Caco-2 (cell line): ENCODE measurements at regions of chr13 and their contacts with region 1.

Region 1: DNA sequence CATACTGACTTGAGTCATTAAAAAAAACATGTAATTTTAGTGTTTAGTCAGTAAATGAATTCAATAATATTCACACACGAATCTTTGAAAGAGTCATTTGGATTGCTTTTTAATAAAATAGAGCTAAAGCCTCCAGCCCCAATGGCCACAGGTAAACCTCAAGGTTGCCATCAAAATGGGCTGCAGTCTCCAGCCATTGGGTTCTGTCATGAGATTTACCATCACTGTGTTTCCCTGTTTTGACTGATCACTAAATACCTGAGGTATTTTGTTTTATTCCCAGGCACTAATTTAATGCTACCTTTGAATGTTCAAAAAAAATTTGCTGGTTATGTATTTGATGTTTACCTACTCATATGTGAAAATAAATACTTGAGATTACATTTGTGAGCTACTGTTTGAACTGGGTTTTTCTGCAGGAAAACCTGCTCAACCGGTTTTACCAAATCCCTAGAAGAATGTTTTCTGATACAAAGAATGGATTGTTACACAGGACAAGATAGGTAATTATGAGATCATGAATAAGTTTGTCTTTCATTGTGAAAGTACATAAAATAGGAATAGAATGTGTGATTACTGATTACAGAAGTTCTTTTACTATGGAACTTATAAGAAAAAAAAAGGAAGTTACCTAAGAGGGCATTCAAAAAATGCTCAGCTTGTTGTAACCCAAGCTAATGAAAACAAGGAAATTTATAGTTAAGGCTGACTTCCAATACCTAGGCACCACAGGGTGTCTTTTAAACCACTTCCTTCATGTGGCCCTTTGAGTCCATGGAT is 391.3 kb downstream of the EFNB2 start:
- DNase-seq: peak; percentile 77 to 86
- H3K4me3 ChIP-seq: no peak overlapping the region
- H3K4me3 Mint-ChIP-seq: peak overlapping the region; percentile 50
- H3K27ac Mint-ChIP-seq: peak overlapping the region; percentile 93
- H3K4me1 ChIP-seq: peaks cover 63% of the 10 kb centered on the region
- H3K4me1 Mint-ChIP-seq: peaks cover 56% of the 10 kb centered on the region
- H3K27me3 ChIP-seq: no peaks in the 10 kb centered on the region
- H3K27me3 Mint-ChIP-seq: no peaks in the 10 kb centered on the region
- CTCF ChIP-seq: no peak

Region 2: GRCh38 chr13:105979131-105980011 is 164.7 kb before region 1 on chr13:
- CTCF ChIA-PET with region 1: no interaction called
- POLR2A ChIA-PET with region 1: interaction called, 10 read pairs
- intact Hi-C with region 1: loop called (anchors 1 kb)
- DNase-seq: peak; percentile 87 to 95
- H3K4me3 ChIP-seq: peak overlapping the region; percentile 9
- H3K4me3 Mint-ChIP-seq: peak overlapping the region; percentile 57
- H3K27ac Mint-ChIP-seq: peak overlapping the region; percentile 82
- H3K4me1 ChIP-seq: peaks cover 40% of the 10 kb centered on the region
- H3K4me1 Mint-ChIP-seq: peaks cover 38% of the 10 kb centered on the region
- H3K27me3 ChIP-seq: no peaks in the 10 kb centered on the region
- H3K27me3 Mint-ChIP-seq: no peaks in the 10 kb centered on the region
- CTCF ChIP-seq: no peak

Region 3: GRCh38 chr13:106129273-106129672 is 14.8 kb before region 1 on chr13:
- CTCF ChIA-PET with region 1: interaction called, 4 read pairs
- POLR2A ChIA-PET with region 1: no interaction called
- intact Hi-C with region 1: loop called (anchors 1 kb)
- DNase-seq: peak in 1 of 2 experiments; percentile 57
- H3K4me3 ChIP-seq: no peak overlapping the region
- H3K4me3 Mint-ChIP-seq: peak overlapping the region; percentile 9
- H3K27ac Mint-ChIP-seq: peak overlapping the region; percentile 68
- H3K4me1 ChIP-seq: peaks cover 41% of the 10 kb centered on the region
- H3K4me1 Mint-ChIP-seq: peaks cover 32% of the 10 kb centered on the region
- H3K27me3 ChIP-seq: no peaks in the 10 kb centered on the region
- H3K27me3 Mint-ChIP-seq: no peaks in the 10 kb centered on the region
- CTCF ChIP-seq: no peak

Region 4: DNA sequence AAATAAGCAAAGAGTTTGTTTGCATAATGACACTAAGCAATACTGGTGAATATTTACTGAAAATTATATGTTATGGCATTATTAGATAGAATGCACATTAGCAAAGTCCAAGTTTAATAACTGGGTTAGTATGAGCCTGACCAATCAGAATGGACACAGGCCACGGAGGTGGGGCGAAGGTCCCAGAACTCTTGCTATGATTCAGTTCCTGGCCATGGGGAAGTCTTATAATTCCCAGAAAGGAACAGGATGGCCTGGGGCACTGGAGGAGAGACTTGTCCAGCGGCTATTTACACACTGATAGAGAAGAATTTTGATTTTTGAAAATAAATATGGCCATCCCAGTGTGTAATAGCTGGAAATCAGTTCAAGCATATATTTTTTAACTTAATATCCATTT is 19.3 kb after region 1 on chr13:
- CTCF ChIA-PET with region 1: no interaction called
- POLR2A ChIA-PET with region 1: no interaction called
- intact Hi-C with region 1: no loop called
- DNase-seq: no peak
- H3K4me3 ChIP-seq: no peak overlapping the region
- H3K4me3 Mint-ChIP-seq: no peak overlapping the region
- H3K27ac Mint-ChIP-seq: no peak overlapping the region
- H3K4me1 ChIP-seq: peaks cover 4% of the 10 kb centered on the region; the same call in 1 of the 2 replicates
- H3K4me1 Mint-ChIP-seq: no peaks in the 10 kb centered on the region
- H3K27me3 ChIP-seq: no peaks in the 10 kb centered on the region
- H3K27me3 Mint-ChIP-seq: no peaks in the 10 kb centered on the region
- CTCF ChIP-seq: no peak

Region 5: GRCh38 chr13:106241974-106242953 is 98.1 kb after region 1 on chr13:
- CTCF ChIA-PET with region 1: no interaction called
- POLR2A ChIA-PET with region 1: no interaction called
- intact Hi-C with region 1: loop called (anchors 1 kb)
- DNase-seq: peak; percentile 63 to 72
- H3K4me3 ChIP-seq: no peak overlapping the region; the same call in 1 of the 2 replicates
- H3K4me3 Mint-ChIP-seq: peak overlapping the region; percentile 69
- H3K27ac Mint-ChIP-seq: peak overlapping the region; percentile 91
- H3K4me1 ChIP-seq: peaks cover 30% of the 10 kb centered on the region
- H3K4me1 Mint-ChIP-seq: peaks cover 31% of the 10 kb centered on the region
- H3K27me3 ChIP-seq: no peaks in the 10 kb centered on the region
- H3K27me3 Mint-ChIP-seq: no peaks in the 10 kb centered on the region
- CTCF ChIP-seq: no peak

Region 6: DNA sequence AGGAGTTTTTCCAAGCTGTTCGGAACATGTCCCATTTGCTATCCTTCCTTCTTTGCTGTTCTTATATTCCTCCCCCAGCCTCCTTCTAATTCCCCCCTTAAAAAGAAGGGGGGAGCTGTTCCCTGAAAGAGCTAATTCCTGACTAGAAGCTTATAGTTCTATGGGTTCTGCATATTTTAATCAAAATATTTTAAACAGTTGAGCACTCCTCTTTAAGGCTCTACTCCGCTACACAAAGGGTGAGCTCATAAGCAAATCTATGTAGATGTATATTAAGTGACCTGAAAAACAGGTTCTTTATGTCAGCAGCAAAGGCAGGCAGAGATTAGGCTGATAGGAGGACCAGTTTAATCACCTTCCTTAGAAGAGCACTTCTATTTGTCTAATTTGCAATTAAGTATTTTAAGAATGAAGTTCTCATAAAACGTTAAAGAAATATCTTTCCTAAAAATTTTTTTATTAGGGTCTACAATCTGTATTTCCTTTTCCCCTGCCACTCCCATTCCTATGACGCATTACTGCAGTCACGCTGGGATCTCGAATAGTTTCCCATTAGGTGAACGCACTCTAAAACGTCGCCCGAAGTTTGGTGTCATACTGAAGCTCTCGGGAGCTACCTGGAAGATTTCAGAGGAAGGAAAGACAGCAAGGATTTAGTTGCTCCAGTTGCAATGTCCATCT is 386.2 kb after region 1 on chr13:
- CTCF ChIA-PET with region 1: interaction called, 5 read pairs
- POLR2A ChIA-PET with region 1: no interaction called
- intact Hi-C with region 1: loop called (anchors 2 kb)
- DNase-seq: no peak
- H3K4me3 ChIP-seq: no peak overlapping the region
- H3K4me3 Mint-ChIP-seq: peak overlapping the region; percentile 97
- H3K27ac Mint-ChIP-seq: peak overlapping the region; percentile 67
- H3K4me1 ChIP-seq: peaks cover 58% of the 10 kb centered on the region
- H3K4me1 Mint-ChIP-seq: peaks cover 62% of the 10 kb centered on the region
- H3K27me3 ChIP-seq: no peaks in the 10 kb centered on the region
- H3K27me3 Mint-ChIP-seq: no peaks in the 10 kb centered on the region
- CTCF ChIP-seq: no peak